ENCODE measurements at regions of chr1 and their contacts with region 1.

Region 1: DNA sequence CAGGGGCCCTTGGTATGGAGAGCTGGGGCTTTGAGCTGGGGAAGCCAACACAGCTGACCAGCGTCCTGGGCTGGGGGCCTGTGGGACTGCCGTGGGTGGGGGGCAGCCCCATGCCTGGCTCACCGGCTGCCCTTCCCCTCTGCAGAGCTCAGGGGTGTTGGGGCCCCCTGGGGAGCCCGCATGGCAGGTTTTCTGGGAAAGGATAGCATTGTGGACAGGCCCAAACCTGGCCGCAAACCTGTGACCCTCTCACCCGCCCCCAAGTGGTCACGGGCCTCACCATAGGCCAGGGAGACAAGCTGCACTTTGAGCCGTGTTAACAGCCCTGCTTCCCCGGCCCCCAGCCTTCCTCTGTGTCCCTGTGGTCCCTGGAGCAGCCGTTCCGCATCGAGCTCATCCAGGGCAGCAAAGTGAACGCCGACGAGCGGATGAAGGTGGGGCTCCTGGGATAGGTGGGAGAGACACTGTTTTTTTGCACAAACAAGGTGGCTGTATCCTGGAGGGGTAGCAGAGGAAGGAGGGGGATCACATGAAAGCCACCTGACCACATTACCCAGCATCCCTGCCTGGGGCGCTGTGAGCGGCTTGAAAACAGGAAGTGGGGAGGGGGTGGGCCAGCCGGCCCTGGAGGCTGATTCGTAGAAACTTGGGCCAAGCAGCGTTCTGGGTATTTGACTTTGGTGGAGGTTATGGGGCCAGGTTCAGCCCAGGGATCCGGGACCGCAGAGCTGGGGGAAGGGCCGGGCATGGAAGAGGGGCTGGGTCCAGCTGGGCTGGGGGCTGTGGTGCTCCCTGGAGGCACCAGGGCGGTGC is 65.9 kb downstream of the PIK3CD start:
- DNase-seq: peak; percentile 68 to 97 (median 90)
- ATAC-seq: peak; percentile 68 to 78
- H3K4me3 Mint-ChIP-seq: peak overlapping the region; percentile 85 to 98 (median 94)
- H3K27ac Mint-ChIP-seq: peak overlapping the region; percentile 82 to 100 (median 98)
- H3K4me1 Mint-ChIP-seq: peaks cover 24 to 77% (median 69%) of the 10 kb centered on the region in 4 donors
- H3K27me3 Mint-ChIP-seq: no peaks in the 10 kb centered on the region

Region 2: DNA sequence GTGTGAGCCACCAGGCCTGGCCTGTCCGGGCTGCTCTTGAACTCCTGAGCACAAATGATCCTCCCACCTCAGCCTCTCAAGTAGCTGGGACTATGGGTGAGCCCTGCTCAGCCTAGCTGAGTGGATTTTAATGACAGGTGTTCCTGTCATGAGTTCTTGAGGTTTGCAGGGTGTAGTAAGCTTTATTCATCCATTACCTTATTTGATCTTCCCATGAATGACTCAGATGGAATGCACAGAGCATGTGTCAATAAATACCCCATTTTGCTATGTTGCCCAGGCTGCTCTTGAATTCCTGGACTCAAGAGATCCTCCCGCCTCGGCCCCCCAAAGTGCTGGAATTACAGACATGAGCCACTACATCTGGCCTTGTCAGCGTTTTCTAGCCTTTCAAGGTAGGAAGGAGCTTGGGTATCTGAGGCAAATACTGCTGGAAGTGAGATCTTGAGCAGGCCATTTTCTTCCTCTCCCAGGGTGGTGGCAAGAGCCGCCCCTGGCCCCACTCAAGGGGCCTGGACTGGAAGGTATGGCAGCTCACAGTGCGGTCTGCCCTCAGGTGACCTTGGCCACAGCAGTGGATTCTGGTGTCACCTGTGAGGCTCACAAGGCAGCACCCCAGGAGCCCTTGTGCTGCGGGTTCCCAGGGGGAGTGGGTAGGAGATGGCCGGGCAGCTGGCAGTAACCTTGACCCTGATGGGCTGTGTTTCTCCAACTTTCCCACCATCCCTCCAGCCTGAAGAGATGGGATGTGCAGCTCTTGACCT is 45.8 kb before region 1 on chr1:
- POLR2A ChIA-PET with region 1: interaction called, 1,258 read pairs
- DNase-seq: peak in 1 of 10 donors; percentile 23
- ATAC-seq: peak; percentile 45 to 55
- H3K4me3 Mint-ChIP-seq: peak overlapping the region in 9 of 10 donors; percentile 24 to 64 (median 45)
- H3K27ac Mint-ChIP-seq: peak overlapping the region; percentile 70 to 90 (median 81)
- H3K4me1 Mint-ChIP-seq: peaks cover 32 to 87% (median 77%) of the 10 kb centered on the region in 4 donors
- H3K27me3 Mint-ChIP-seq: no peaks in the 10 kb centered on the region

Region 3: DNA sequence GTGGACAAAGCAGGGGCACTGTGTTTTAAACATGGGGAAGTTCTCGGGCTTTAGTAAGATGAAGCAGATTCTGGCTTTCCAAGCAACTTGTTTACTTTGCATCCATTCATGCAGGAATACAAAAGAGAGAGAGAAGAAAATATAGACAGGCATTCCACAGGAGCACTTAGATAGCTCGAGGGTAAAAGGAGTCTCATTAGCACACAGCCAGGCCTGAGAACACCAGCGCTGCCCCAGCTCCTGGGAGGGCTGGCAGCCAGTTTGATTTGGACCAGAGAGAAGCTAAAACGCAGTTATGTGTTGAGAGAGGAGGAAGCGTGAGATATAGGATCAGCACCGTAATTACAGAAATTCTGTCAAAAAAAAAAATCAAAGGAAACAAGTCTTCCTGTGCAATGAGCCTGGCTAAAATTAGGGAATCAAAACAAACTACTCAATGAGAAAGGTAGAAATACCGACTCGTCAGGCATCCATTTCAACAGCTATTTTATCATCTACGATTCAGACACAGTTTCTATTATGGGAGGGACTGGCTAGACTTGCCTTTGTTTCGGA is 38.1 kb after region 1 on chr1:
- POLR2A ChIA-PET with region 1: no interaction called
- DNase-seq: no peak
- ATAC-seq: no peak
- H3K4me3 Mint-ChIP-seq: no peak overlapping the region
- H3K27ac Mint-ChIP-seq: peak overlapping the region in 6 of 10 donors; percentile 10 to 76 (median 35)
- H3K4me1 Mint-ChIP-seq: peaks cover 6 to 20% (median 9%) of the 10 kb centered on the region in 4 donors
- H3K27me3 Mint-ChIP-seq: no peaks in the 10 kb centered on the region

Region 4: DNA sequence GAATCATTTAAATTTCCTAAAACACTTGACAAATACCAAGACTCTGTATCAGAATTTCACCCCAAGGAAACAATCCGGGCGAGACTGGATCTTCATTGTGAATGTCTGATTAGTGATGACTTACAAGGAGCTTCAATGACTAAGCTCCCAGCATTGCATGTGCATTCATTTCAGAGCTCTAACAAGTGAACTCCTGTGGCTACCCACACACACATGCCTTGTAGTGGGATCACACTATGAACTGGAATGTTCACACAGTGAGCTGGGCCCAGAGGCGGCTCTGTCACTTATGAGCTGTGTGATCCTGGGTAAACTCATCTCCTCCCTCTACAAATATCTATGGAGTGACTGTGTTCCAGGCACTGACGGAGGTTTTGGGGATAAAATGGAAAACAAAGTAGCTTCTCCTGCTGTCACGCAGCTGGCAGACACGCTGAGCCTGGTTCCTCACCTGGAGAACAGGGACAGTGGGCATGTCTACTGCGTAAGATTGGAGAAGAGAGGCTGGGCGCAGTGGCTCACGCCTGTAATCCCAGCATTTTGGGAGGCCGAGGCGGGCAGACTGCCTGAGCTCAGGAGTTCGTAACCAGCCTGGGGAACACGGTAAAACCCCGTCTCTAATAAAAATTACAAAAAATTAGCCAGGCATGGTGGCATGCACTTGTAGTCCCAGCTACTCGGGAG is 49.5 kb after region 1 on chr1:
- POLR2A ChIA-PET with region 1: no interaction called
- DNase-seq: no peak
- ATAC-seq: no peak
- H3K4me3 Mint-ChIP-seq: no peak overlapping the region
- H3K27ac Mint-ChIP-seq: peak overlapping the region in 1 of 10 donors; percentile 35
- H3K4me1 Mint-ChIP-seq: peaks cover 6 to 32% (median 11%) of the 10 kb centered on the region in 4 donors
- H3K27me3 Mint-ChIP-seq: no peaks in the 10 kb centered on the region

Region 5: DNA sequence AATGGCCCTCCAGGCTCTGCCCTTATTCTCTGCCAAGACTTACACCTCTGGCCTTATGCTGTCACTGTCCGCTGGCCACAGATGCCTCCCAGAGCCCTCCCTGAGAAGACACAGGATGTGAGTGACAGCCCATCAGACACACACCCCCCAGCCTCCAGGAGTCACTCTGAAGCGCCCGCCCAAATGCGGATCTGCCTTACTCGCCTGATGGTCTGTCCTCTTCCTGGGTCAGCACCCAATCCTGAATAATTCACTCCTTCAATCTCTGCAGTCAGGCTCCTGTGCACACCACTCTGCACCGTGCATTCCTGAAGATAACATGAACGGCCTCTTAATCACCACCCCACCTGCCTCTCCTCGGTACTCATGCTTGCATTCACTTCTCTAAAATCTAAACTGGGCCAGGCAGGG is 91.7 kb after region 1 on chr1:
- POLR2A ChIA-PET with region 1: no interaction called
- DNase-seq: no peak
- ATAC-seq: no peak
- H3K4me3 Mint-ChIP-seq: peak overlapping the region in 1 of 10 donors; percentile 5
- H3K27ac Mint-ChIP-seq: peak overlapping the region in 8 of 10 donors; percentile 7 to 82 (median 57)
- H3K4me1 Mint-ChIP-seq: peaks cover 21 to 61% (median 48%) of the 10 kb centered on the region in 4 donors
- H3K27me3 Mint-ChIP-seq: no peaks in the 10 kb centered on the region

Region 6: DNA sequence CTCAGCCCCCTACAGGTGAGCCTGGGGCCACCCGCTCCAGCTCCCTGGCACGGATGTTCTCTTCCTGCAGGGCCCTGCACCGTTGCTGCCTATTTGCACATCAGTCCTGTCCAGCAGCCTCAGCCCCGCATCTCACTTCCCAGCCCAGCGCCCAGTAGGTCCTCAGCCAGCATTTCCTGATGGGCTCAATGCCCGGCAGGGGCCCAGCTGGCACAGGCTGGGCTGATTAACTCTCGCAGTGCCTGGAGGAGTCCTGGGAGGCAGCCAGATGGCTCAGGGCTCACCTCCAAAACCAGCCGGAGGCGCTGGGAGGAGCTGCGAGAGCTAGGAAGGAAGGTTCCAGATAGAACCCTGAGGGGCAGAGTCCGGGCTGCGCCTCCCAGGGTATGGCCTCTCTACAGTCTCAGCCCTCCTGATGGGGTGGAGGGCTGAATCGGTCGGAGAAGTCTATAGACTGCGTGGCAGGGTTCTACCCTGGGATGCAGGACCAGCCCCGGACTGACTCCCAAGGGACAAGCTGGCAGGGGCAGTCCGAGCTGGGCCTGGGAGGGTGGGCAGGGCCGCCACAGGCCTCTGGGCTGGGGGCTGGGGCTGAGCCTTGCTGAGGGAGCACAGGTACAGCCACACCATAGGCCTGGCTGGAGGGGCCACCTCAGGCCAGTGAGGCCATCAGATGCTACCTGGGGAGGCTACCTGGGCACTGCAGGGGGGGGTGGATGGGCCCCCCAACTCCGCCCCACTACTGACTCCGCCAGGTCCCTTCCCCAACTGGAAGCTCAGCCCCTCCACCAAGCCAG is 125.6 kb after region 1 on chr1:
- POLR2A ChIA-PET with region 1: no interaction called
- DNase-seq: no peak
- ATAC-seq: no peak
- H3K4me3 Mint-ChIP-seq: no peak overlapping the region
- H3K27ac Mint-ChIP-seq: no peak overlapping the region
- H3K4me1 Mint-ChIP-seq: peaks cover 0 to 6% (median 1%) of the 10 kb centered on the region in 4 donors
- H3K27me3 Mint-ChIP-seq: no peaks in the 10 kb centered on the region

Measured in naive thymus-derived CD8-positive, alpha-beta T cell (primary cell).